Prostate gland (tissue), 2 donors: ENCODE measurements at regions of chr11 and their contacts with region 1.

Region 1: DNA sequence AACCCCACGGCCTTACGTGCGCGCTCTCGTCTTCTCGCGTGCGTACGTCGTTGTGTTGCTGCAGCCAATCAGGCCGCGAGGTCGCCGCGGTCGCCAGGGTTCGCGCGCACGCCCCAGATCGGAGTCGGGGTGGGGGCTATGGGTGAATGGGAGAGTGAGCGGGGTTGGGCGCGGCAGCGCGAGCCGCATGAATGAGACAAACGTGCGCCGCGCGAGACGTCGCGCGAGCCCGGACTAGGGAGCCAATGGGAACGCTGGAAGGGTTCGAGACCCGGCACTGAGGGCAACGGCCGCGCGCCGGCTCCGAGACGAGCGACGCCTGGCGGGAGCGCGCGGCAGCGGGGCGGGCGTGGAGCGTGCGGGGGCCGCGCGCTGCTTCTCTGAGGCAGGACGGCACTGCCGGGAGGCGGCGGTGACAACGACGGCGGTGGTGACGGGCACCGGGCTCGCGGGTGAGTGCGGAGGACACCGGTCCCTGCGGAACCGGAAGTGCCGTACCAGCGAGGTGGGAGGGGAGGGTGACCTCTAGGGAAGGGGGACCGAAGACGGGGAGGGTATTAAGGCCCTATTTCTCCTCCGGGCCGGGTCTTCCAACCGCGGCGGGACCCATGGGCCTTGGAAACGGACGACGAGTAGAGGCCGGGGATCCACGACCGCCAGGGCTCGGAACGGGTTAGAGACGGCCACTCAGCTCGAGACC is at the start of gene ZDHHC5:
- DNase-seq: peak; percentile 99
- H3K4me3 ChIP-seq: peak within 1 kb of the TSS; percentile 81 to 99
- H3K27ac ChIP-seq: peak within 1 kb of the TSS; percentile 97 to 99
- H3K4me1 ChIP-seq: no peaks in the 10 kb centered on the region
- H3K27me3 ChIP-seq: no peaks in the 10 kb centered on the region
- CTCF ChIP-seq: peak; percentile 56 to 85 (median 73)
- POLR2A ChIP-seq: peak; percentile 72
- total RNA-seq, gene ZDHHC5: 65.4 to 69.9 TPM

Region 2: GRCh38 chr11:57444362-57445121 is 223.3 kb before region 1 on chr11:
- intact Hi-C with region 1: no loop called
- DNase-seq: no peak
- H3K4me3 ChIP-seq: no peak overlapping the region
- H3K27ac ChIP-seq: no peak overlapping the region
- H3K4me1 ChIP-seq: no peaks in the 10 kb centered on the region
- H3K27me3 ChIP-seq: peaks cover 2% of the 10 kb centered on the region
- CTCF ChIP-seq: no peak
- POLR2A ChIP-seq: no peak

Region 3: GRCh38 chr11:57712256-57713150 is 44.6 kb after region 1 on chr11 and contains the start of gene TMX2:
- intact Hi-C with region 1: loop called (anchors 5 kb)
- DNase-seq: peak; percentile 95
- H3K4me3 ChIP-seq: peak within 1 kb of the TSS; percentile 81 to 96
- H3K27ac ChIP-seq: peak within 1 kb of the TSS; percentile 89 to 93
- H3K4me1 ChIP-seq: peaks cover 2% of the 10 kb centered on the region
- H3K27me3 ChIP-seq: no peaks in the 10 kb centered on the region
- CTCF ChIP-seq: no peak
- POLR2A ChIP-seq: no peak
- total RNA-seq, gene TMX2: 80.8 to 84.4 TPM

Region 4: DNA sequence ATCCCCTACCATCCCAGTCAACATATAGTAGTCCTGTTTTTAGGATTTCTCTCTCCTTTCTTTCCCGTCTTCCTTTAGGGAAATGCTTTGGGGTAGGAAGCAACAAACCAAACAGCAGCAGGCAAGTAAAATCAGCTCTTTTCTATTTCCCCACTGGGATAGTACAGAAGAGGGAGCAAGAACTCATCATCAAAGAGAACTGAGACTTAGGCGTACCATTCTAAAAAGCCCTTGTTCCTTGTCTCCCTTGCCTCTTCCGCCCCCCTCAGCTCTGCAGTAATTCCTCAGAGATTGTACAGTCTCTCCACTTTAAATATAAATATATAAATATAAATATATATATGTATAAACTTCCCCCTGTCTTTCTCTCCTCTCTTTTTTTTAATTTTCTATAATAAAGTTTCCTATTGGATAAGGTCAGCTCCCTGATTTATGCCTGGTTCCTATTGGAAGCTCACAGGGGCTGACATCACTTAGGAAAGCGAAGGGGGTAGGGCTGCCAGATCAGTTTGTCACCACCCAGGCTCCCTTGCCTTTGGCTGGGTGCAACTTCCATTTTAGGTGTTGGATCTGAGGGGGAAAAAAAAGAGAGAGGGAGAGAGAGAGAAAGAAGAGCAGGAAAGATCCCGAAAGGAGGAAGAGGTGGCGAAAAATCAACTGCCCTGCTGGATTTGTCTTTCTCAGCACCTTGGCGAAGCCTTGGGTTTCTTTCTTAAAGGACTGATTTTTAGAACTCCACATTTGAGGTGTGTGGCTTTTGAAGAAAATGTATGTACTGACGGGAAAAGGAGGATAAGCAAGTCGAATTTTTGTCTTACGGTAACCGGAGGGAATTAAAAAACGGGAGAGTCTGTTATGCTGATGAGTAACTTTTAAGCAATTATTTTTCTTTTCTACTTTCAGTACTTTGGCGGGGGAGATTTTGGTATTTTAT is 93.7 kb after region 1 on chr11 and contains the start of gene CTNND1:
- intact Hi-C with region 1: loop called (anchors 5 kb)
- DNase-seq: peak; percentile 94
- H3K4me3 ChIP-seq: peak within 1 kb of the TSS; percentile 46 to 69
- H3K27ac ChIP-seq: peak within 1 kb of the TSS; percentile 92 to 97
- H3K4me1 ChIP-seq: peaks cover 8% of the 10 kb centered on the region
- H3K27me3 ChIP-seq: no peaks in the 10 kb centered on the region
- CTCF ChIP-seq: peak in 1 of 4 experiments; percentile 25
- POLR2A ChIP-seq: peak; percentile 93
- total RNA-seq, gene CTNND1: 189 to 223 TPM